Pancreas (tissue), 10 donors: ENCODE measurements at regions of chr7 and their contacts with region 1.

Region 1: GRCh38 chr7:1503816-1504775 is at the start of gene INTS1:
- DNase-seq: peak; percentile 90 to 96 (median 94)
- ATAC-seq: peak; percentile 83 to 93 (median 86)
- H3K4me3 ChIP-seq: peak within 1 kb of the TSS; percentile 89 to 100 (median 98)
- H3K27ac ChIP-seq: peak within 1 kb of the TSS; percentile 65 to 83 (median 82)
- H3K4me1 ChIP-seq: peaks cover 4 to 17% (median 12%) of the 10 kb centered on the region in 3 donors
- H3K27me3 ChIP-seq: no peaks in the 10 kb centered on the region
- CTCF ChIP-seq: peak; percentile 88 to 96 (median 92)
- total RNA-seq, gene INTS1: 45.0 to 73.2 (median 58.3) TPM

Region 2: DNA sequence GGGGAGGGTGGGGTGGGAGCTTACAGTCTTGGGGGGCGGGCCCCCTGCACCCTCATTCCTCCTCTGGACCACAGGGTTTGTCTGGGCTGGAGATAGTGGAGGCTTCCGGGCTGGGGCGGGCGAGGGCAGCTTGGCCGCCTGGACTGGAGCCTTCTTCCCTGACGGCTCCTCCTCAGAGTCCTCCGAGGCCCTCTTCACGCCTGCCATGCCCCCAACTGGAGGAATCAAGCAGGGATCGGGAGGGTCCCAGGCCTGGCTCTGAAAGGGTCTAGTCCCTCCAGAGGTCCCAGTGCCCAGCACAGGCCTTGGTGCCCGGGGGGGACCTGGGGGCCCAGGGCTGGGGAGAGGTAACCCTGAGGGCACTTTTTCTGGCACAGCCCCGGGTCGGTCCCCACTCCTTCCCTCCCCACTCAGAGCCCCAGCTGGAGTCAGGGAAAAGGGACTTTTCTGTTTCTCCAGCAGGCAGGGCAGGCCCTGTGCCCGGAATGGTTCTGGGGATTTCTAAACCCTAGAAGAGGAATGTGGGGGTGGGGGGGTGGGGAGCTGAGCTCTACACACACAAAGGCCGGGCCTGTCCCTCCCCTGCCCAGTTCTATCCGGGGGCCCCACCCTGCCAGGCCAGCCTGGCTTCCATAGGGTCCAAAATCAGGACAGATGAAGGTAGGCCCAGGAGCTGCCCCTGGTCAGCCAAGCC is 56.4 kb before region 1 on chr7:
- intact Hi-C with region 1: loop called in 1 of 3 experiments (anchors 10 kb)
- DNase-seq: no peak
- ATAC-seq: peak in 3 of 4 donors; percentile 28 to 64 (median 38)
- H3K4me3 ChIP-seq: no peak overlapping the region
- H3K27ac ChIP-seq: peak overlapping the region in 1 of 4 donors; percentile 48
- H3K4me1 ChIP-seq: no peaks in the 10 kb centered on the region
- H3K27me3 ChIP-seq: no peaks in the 10 kb centered on the region
- CTCF ChIP-seq: no peak

Region 3: DNA sequence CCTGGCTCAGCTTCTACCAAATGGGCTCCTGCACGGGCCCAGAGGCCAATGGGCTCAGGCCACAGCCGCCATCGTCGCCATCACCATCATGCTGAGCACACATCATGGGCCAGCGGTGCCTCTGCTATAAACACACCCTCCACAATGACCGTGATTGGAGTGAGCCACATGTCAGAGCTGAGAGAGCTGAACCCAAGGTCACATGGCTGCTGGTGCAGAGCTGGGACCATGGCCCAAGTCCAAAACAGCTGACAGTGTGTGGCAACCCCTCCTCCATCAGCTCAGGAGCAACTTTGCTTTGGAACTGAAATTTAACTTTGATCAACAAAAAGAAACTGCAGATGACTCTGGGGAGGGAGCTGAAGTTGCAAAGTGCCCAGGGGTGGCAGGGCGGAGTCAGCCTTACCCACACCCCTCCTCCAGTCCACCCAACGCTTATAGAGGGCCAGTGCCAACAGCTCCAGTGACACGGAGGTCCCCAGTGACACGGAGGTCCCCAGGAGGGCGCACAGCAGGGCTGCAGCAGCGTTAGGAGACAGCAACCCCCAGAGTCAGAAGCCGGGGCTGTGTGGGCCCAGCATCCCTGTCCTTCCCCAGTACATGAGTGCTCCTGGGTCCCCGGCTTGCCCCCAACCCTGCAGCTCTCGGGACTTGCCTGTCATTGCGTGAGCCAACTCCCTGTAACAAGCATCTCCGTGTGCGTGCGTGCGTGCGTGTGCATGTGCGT is 415.6 kb after region 1 on chr7:
- intact Hi-C with region 1: no loop called
- DNase-seq: peak in 5 of 6 donors; percentile 73 to 79 (median 78)
- ATAC-seq: peak; percentile 83 to 93 (median 86)
- H3K4me3 ChIP-seq: no peak overlapping the region
- H3K27ac ChIP-seq: no peak overlapping the region
- H3K4me1 ChIP-seq: peaks cover 0 to 7% (median 0%) of the 10 kb centered on the region in 3 donors
- H3K27me3 ChIP-seq: no peaks in the 10 kb centered on the region
- CTCF ChIP-seq: no peak